T-cell (primary cell): ENCODE measurements at regions of chr1 and their contacts with region 1.

Region 1: DNA sequence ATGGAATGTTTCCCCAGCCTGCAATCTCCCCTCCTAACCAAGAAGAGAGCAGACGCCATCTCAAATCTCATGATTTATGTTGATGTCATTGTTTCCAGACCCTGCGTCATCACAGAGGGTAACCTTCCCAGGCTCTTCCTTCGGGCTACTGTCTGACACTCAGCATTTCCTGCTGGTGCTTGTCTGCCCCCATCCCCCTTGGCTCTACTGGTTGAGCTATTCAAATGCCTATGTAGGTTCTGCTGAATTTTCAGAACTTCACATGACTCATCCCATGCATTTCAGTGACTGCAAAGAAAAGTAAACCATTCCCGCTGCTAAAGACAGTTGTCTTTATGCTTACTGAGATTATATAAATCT is 24.8 kb upstream of the ITPKB start:
- DNase-seq: peak in 8 of 35 experiments; percentile 2 to 28 (median 8)
- ATAC-seq: peak in 3 of 4 experiments; percentile 27 to 87 (median 33)
- H3K4me3 ChIP-seq: no peak overlapping the region
- H3K4me3 Mint-ChIP-seq: peak overlapping the region in 1 of 3 donors; percentile 41
- H3K27ac ChIP-seq: no peak overlapping the region
- H3K27ac Mint-ChIP-seq: no peak overlapping the region
- H3K4me1 ChIP-seq: peaks cover 8 to 21% of the 10 kb centered on the region in 2 experiments
- H3K4me1 Mint-ChIP-seq: peaks cover 21 to 25% (median 23%) of the 10 kb centered on the region in 3 donors
- H3K27me3 ChIP-seq: no peaks in the 10 kb centered on the region
- H3K27me3 Mint-ChIP-seq: no peaks in the 10 kb centered on the region

Region 2: DNA sequence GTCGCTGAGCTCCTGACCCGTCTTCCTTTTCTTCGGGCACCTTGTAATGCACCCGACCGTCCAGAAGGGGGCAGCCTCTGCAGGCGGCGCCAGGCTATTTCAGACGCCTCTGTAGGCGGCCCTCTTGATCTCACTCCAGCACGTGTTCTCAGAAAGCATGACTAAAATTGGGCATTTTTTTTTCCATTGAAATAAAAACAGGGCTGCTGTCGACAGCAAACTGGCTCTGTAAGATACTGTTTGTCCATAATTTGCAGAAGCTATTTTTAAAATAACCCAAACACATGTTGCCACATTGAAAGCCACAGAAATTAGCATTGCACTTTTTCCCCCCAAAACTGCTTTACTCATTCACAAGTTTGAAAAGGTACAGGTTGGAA is 137.3 kb before region 1 on chr1:
- CTCF ChIA-PET with region 1: interaction called, 3 to 10 read pairs
- POLR2A ChIA-PET with region 1: no interaction called
- DNase-seq: peak; percentile 48 to 86 (median 69)
- ATAC-seq: peak; percentile 83 to 95 (median 84)
- H3K4me3 ChIP-seq: peak overlapping the region; percentile 6 to 39
- H3K4me3 Mint-ChIP-seq: peak overlapping the region; percentile 29 to 65 (median 37)
- H3K27ac ChIP-seq: no peak overlapping the region
- H3K27ac Mint-ChIP-seq: peak overlapping the region; percentile 67 to 75
- H3K4me1 ChIP-seq: peaks cover 8 to 15% of the 10 kb centered on the region in 2 experiments
- H3K4me1 Mint-ChIP-seq: peaks cover 18 to 36% (median 26%) of the 10 kb centered on the region in 3 donors
- H3K27me3 ChIP-seq: peaks cover 0 to 15% of the 10 kb centered on the region in 2 experiments
- H3K27me3 Mint-ChIP-seq: peaks cover 0 to 2% of the 10 kb centered on the region in 2 donors

Region 3: GRCh38 chr1:226708342-226708780 is 55.5 kb before region 1 on chr1:
- CTCF ChIA-PET with region 1: no interaction called
- POLR2A ChIA-PET with region 1: no interaction called
- DNase-seq: no peak
- ATAC-seq: peak; percentile 7 to 55 (median 40)
- H3K4me3 ChIP-seq: no peak overlapping the region
- H3K4me3 Mint-ChIP-seq: peak overlapping the region; percentile 11 to 83 (median 66)
- H3K27ac ChIP-seq: peak overlapping the region; percentile 54
- H3K27ac Mint-ChIP-seq: peak overlapping the region; percentile 97 to 98
- H3K4me1 ChIP-seq: peaks cover 62 to 70% of the 10 kb centered on the region in 2 experiments
- H3K4me1 Mint-ChIP-seq: peaks cover 90 to 94% (median 91%) of the 10 kb centered on the region in 3 donors
- H3K27me3 ChIP-seq: no peaks in the 10 kb centered on the region
- H3K27me3 Mint-ChIP-seq: no peaks in the 10 kb centered on the region